Heart right ventricle (tissue), 16 donors: ENCODE measurements at regions of chr3 and their contacts with region 1.

Region 1: DNA sequence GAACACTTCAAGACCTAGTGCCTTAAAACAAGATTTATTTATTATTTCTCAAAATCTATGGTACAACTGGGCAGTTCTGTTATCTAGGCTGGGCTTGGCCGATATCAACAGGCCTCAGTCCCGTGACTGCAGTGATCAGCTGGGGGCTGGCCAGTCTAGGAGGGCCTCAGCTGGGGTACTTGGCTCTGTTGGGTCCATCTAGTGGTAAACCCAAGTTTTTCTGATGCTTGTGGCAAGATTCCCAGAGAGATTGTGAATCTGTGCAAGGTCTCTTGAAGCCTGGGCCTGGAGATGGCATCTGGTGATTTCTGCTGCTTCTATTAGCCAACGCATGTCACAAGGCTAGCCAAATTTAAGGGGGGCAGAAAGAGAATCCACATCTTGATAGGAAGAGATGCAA is 482.4 kb upstream of the SGO1 start:
- DNase-seq: no peak
- ATAC-seq: peak in 5 of 8 donors; percentile 21 to 58 (median 29)
- H3K4me3 ChIP-seq: no peak overlapping the region
- H3K27ac ChIP-seq: peak overlapping the region in 8 of 10 donors; percentile 10 to 71 (median 44)
- H3K4me1 ChIP-seq: peaks cover 0 to 28% (median 18%) of the 10 kb centered on the region in 9 donors
- H3K27me3 ChIP-seq: no peaks in the 10 kb centered on the region
- CTCF ChIP-seq: no peak

Region 2: DNA sequence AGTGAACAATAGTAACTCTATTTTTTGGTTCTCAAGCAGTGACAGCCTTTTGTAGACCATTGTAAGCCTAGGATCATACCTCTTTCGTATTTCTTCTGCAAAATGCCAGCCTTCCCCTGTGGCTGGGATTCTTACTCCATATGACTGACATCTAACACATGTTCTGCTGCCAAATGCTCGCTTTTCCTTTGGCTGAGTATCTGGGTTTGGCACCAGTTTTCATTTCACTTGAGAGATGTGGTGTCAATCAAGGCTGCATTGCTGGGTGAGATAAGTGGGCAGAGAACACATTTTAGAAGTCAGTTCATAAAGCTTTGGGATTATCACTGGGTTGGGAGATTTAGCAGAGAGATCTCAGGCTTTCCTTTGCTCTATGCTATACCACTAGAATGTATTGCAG is 32.3 kb after region 1 on chr3:
- intact Hi-C with region 1: loop called in 1 of 10 experiments (anchors 5 kb)
- DNase-seq: no peak
- ATAC-seq: peak in 3 of 8 donors; percentile 8 to 68 (median 63)
- H3K4me3 ChIP-seq: no peak overlapping the region
- H3K27ac ChIP-seq: no peak overlapping the region
- H3K4me1 ChIP-seq: peaks cover 0 to 8% (median 0%) of the 10 kb centered on the region in 9 donors
- H3K27me3 ChIP-seq: no peaks in the 10 kb centered on the region
- CTCF ChIP-seq: no peak